ENCODE measurements at regions of chr16 and their contacts with region 1.

Region 1: GRCh38 chr16:57372372-57373116 is at the start of gene CX3CL1:
- DNase-seq: peak; percentile 88
- total RNA-seq, gene CX3CL1: 8.7 TPM

Region 2: DNA sequence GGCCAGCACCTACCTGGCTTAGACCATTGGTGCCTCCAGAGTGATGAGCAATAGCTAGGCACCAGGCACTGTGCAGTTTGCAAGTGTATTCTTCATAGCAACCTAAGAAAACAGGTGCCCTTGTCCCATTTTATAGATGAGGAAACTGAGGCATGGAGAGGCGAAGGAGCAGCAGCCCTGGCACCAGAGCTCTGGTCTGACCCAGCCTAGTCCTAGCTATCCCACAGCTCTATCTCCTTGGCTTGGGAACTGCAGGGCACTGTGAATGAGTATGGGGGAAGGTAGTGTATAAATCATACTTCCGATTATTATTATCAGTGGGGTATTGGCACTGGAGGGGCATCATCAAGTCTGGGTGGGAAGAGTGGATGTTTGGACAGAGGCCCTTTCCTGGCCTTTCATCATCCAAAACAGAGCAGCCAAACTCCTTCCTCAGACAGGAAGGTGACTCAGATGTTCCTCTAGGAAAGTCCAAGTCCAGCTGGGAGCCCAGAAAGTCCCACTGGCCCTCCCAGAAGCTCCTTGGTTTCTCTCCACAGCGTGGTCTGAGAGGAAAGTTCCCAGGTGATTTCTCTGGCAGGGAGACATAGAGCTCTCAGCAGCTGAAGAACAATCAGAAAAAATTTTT is 56.0 kb before region 1 on chr16:
- intact Hi-C with region 1: loop called (anchors 2 kb)
- DNase-seq: no peak

Region 3: DNA sequence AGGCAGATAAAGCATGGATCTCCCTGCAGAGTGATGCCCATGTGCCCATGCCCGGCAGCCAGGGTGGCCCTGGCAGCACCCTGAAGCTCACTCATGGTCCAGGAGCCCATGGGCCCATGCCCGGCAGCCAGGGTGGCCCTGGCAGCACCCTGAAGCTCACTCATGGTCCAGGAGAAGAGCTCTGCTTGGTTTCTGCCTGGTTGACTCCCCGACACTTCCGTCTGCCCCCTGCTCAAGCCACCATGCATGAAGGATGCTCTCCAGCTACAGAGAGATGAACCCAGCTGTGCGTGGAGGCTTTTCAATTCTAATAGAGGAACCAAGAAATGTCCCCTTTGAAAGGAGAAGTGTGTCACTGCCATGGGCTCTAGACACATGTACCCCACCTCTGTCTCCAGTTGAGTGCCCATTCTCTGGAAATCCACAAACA is 40.8 kb after region 1 on chr16:
- intact Hi-C with region 1: loop called (anchors 5 kb)
- DNase-seq: peak; percentile 63

Measured in cardiac septum (tissue), 1 donor.